ENCODE measurements at regions of chr11 and their contacts with region 1.

Region 1: GRCh38 chr11:130213143-130213978 is 53.8 kb downstream of the ST14 start:
- DNase-seq: peak; percentile 42 to 84 (median 65)
- H3K4me3 ChIP-seq: peak overlapping the region in 18 of 59 donors; percentile 6 to 46 (median 26)
- H3K27ac ChIP-seq: peak overlapping the region in 3 of 59 donors; percentile 0 to 38 (median 21)
- H3K27me3 ChIP-seq: no peaks in the 10 kb centered on the region
- CTCF ChIP-seq: peak; percentile 73 to 99 (median 96)

Region 2: DNA sequence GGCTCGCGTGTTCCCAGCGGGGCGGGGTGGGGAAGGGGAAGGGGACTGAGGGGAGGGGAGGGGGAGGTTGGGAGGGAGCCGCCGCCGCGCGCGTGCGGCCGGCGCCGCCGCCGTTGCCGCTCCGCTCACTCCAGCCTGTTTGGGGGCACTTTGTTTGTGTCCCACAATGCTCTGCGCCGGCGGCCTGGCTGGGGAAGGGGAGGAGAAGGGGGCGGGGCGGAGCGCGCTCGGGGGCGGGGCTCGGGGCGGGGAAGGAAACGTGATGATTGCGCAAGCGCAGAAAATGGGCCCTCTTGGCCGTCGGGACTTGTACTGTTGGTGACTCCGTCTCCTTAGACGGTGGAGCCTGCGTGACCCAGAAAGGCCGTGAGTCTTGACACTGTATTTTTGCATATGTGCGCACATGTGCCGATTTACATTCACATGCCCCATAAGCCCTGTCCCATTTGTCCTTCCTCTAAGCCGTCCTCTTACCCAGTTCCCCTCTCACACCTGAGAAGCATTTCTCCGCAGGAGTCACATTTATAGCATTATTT is 101.5 kb after region 1 on chr11 and contains the start of gene ZBTB44:
- intact Hi-C with region 1: loop called (anchors 5 kb)
- DNase-seq: peak; percentile 91 to 96 (median 94)
- H3K4me3 ChIP-seq: peak within 1 kb of the TSS; percentile 53 to 98 (median 89)
- H3K27ac ChIP-seq: peak within 1 kb of the TSS; percentile 55 to 95 (median 88)
- H3K27me3 ChIP-seq: no peaks in the 10 kb centered on the region
- CTCF ChIP-seq: peak in 10 of 56 donors; percentile 13 to 40 (median 34)
- total RNA-seq, gene ZBTB44: 48.9 to 117 (median 68.8) TPM

Region 3: DNA sequence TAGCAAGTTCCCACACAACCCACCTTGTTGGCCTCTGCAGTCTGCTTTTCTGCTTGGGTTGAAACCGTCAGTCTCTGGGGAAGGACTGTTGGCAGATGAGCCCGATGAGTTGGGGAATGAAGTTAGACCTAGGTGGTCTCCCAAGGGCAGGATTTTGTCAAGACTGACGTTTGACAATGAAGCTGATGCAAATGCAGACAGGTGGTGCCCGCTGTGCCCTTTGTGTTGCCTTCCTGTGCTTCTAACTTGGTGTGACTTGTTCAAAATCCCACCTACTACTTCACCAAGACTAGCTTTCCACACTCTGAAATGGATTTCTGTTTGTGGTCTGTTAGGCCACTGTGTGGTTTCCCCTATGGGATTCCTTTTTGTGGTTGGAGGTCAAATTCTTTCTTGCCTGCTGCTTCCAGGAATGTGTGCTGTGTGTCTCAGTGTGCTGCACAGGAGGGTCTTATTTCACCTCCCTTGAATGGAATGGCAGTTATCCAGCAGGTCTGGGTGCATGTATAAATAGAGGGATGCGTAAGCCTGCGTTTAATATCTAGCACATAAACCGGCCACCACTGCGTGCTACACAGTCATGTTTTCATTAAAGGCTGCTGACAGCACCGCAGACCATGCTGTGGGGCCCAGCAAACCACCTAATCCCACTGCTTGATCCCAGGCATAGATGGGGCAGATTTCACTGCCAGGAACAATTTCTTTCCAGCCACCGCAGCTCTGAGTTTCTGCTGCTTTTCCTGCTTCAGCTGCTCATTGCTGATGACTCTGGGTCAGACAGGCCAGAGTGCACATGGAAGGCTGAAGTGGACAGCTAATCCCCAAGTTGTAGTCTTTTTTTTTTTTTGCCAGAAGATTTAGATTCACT is 170.2 kb after region 1 on chr11:
- intact Hi-C with region 1: loop called (anchors 5 to 10 kb)
- DNase-seq: no peak
- H3K4me3 ChIP-seq: no peak overlapping the region
- H3K27ac ChIP-seq: no peak overlapping the region
- H3K27me3 ChIP-seq: no peaks in the 10 kb centered on the region
- CTCF ChIP-seq: no peak

Region 4: GRCh38 chr11:130427581-130428315 is 214.4 kb after region 1 on chr11:
- intact Hi-C with region 1: loop called (anchors 1 to 2 kb)
- DNase-seq: peak in 8 of 10 donors; percentile 55 to 80 (median 65)
- H3K4me3 ChIP-seq: peak overlapping the region; percentile 46 to 82 (median 66)
- H3K27ac ChIP-seq: peak overlapping the region in 53 of 59 donors; percentile 12 to 91 (median 75)
- H3K27me3 ChIP-seq: peaks cover 0 to 14% (median 0%) of the 10 kb centered on the region in 45 donors
- CTCF ChIP-seq: peak in 53 of 56 donors; percentile 13 to 69 (median 49)

Region 5: GRCh38 chr11:130894322-130895025 is 681.1 kb after region 1 on chr11:
- intact Hi-C with region 1: loop called in 1 of 2 experiments (anchors 10 kb)
- DNase-seq: peak; percentile 65 to 89 (median 80)
- H3K4me3 ChIP-seq: peak overlapping the region in 8 of 59 donors; percentile 2 to 25 (median 12)
- H3K27ac ChIP-seq: peak overlapping the region in 57 of 59 donors; percentile 16 to 88 (median 70)
- H3K27me3 ChIP-seq: no peaks in the 10 kb centered on the region
- CTCF ChIP-seq: peak; percentile 79 to 98 (median 94)

Measured in dorsolateral prefrontal cortex (tissue), 120 donors.